ENCODE measurements at regions of chr1 and their contacts with region 1.

Region 1: DNA sequence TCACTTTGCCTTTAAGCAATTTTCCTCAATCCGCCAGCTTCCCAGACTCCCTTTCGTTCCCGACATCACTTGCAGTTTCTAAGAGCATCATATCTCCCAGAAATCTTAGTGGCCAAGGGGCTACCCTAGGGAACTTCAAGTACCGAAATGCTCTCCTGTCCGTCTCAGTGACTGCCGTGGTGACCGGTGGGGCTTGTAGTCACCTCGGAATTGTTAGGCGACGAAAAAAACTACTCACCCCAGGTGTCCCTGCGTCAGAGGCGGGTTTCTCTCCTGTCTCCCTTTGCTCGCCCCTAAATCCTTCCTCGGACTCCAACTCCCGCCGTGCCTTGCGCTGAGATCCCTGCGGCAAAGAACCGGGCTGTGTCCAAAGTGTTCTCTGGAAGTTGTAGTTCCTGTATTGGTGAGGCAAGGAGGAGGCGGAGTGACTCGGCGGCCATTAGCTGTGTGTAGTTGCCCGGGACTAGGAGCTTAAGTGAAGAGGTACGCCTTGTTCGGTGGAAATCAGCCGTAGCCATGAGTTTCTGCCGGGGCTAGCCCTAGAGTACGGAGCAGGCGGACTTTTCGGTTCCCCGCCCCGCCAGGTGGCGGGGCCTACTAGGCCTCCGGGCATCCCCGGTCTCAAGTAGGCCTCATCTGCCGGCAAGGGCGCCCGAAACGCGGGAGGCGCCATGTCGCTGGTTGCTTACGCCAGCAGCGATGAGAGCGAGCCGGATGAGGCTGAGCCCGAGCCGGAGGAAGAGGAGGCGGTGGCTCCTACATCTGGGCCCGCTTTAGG is at the start of gene PRCC:
- DNase-seq: peak; percentile 100
- H3K4me3 Mint-ChIP-seq: no peak within 1 kb of the TSS
- H3K27ac Mint-ChIP-seq: no peak within 1 kb of the TSS
- H3K4me1 Mint-ChIP-seq: peaks cover 36% of the 10 kb centered on the region
- H3K27me3 Mint-ChIP-seq: no peaks in the 10 kb centered on the region
- CTCF ChIP-seq: no peak
- total RNA-seq, gene PRCC: 112 and 131 TPM in 2 replicates

Region 2: DNA sequence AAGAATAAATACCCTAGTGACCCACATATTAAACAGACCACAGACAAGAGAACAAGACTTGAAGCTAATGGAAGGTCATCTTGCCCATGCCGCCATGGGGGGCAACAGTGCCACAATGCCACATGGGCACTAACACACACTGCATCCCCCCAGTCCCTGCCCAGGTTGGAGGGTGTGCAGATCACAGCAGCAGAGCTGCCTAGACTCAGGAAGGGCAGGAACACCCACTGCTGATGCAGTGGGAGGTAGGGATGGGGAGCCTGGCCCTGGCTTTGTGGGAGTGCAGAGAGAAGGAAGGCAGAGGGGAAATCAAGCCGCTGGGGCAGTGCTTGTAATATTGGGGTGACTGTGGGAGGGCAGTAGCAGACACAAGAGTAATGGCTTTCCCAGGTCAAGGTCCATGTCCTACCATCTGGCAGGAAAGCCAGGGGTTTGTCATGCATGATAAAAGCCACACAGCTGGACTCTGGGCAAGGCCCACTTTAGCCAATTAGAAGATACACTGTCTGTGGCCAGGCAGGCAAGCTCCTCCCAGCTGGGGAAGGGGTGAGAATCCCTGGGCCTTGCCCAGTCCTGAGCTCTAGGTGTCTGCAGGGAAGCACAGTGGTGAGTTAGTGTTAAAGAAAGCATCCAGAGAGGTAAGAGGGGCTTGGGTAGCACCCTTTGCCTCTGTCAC is 241.3 kb before region 1 on chr1:
- CTCF ChIA-PET with region 1: no interaction called
- POLR2A ChIA-PET with region 1: no interaction called
- intact Hi-C with region 1: no loop called
- DNase-seq: no peak
- H3K4me3 Mint-ChIP-seq: no peak overlapping the region
- H3K27ac Mint-ChIP-seq: no peak overlapping the region
- H3K4me1 Mint-ChIP-seq: no peaks in the 10 kb centered on the region
- H3K27me3 Mint-ChIP-seq: no peaks in the 10 kb centered on the region
- CTCF ChIP-seq: no peak

Region 3: GRCh38 chr1:156705918-156706656 is 61.2 kb before region 1 on chr1:
- CTCF ChIA-PET with region 1: interaction called, 11 read pairs
- POLR2A ChIA-PET with region 1: interaction called, 4 read pairs
- intact Hi-C with region 1: no loop called
- DNase-seq: peak; percentile 57
- H3K4me3 Mint-ChIP-seq: peak overlapping the region; percentile 30
- H3K27ac Mint-ChIP-seq: no peak overlapping the region
- H3K4me1 Mint-ChIP-seq: peaks cover 38% of the 10 kb centered on the region
- H3K27me3 Mint-ChIP-seq: no peaks in the 10 kb centered on the region
- CTCF ChIP-seq: peak; percentile 99

Region 4: GRCh38 chr1:156733989-156734584 is 33.2 kb before region 1 on chr1:
- CTCF ChIA-PET with region 1: interaction called, 12 read pairs
- POLR2A ChIA-PET with region 1: interaction called, 375 read pairs
- intact Hi-C with region 1: no loop called
- DNase-seq: no peak
- H3K4me3 Mint-ChIP-seq: no peak overlapping the region
- H3K27ac Mint-ChIP-seq: peak overlapping the region; percentile 66
- H3K4me1 Mint-ChIP-seq: peaks cover 16% of the 10 kb centered on the region
- H3K27me3 Mint-ChIP-seq: no peaks in the 10 kb centered on the region
- CTCF ChIP-seq: no peak

Region 5: DNA sequence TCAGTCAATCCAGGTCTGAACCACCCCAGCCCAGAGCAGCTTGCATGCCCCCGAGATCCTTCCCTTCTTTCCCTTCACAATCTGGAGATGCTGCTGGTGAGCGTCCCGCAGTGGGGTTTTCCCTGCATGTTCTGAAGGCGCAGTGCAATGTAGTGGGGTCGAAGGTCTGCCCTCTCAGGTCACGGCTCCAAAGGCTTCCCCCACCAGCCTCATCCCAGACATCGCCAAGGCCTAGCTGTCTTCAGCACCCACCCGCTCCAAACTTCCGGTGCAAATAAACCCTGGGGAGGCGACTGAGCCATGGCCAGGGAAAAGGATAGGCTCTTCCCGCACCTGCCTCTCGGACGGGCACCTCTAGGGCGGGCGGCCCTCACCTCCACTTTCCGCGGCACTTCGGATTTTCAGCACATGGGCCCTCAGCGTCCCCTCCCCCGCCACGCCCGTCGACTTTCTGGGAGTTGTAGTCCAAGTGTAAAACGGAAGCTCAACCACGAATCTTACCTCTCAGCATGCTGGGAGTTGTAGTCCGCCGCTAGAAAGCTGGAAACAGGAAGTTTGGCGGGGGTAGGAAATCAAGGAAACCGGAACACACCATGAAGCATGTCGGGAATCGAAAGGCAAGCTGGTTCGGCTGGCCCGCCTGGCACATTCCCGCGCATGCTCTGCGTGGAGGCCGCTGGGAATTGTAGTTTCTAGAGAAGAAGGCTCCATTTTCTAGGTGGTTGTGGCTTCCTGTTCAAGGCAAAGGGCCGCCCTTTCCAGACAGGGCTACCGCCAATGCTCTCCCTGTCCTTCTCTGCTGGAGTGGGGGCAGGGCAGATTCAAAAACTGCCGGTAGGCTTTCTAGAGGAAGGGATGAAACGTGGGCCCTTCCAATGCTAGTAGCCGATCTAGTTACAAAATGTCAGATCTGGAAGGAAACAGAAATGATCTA is 26.3 kb before region 1 on chr1 and contains the start of gene MRPL24:
- CTCF ChIA-PET with region 1: interaction called, 12 read pairs
- POLR2A ChIA-PET with region 1: interaction called, 375 read pairs
- intact Hi-C with region 1: loop called (anchors 1 kb)
- DNase-seq: peak; percentile 100
- H3K4me3 Mint-ChIP-seq: peak within 1 kb of the TSS; percentile 100
- H3K27ac Mint-ChIP-seq: peak within 1 kb of the TSS; percentile 98
- H3K4me1 Mint-ChIP-seq: peaks cover 30% of the 10 kb centered on the region
- H3K27me3 Mint-ChIP-seq: no peaks in the 10 kb centered on the region
- CTCF ChIP-seq: no peak
- total RNA-seq, gene MRPL24: 233 and 261 TPM in 2 replicates

Region 6: DNA sequence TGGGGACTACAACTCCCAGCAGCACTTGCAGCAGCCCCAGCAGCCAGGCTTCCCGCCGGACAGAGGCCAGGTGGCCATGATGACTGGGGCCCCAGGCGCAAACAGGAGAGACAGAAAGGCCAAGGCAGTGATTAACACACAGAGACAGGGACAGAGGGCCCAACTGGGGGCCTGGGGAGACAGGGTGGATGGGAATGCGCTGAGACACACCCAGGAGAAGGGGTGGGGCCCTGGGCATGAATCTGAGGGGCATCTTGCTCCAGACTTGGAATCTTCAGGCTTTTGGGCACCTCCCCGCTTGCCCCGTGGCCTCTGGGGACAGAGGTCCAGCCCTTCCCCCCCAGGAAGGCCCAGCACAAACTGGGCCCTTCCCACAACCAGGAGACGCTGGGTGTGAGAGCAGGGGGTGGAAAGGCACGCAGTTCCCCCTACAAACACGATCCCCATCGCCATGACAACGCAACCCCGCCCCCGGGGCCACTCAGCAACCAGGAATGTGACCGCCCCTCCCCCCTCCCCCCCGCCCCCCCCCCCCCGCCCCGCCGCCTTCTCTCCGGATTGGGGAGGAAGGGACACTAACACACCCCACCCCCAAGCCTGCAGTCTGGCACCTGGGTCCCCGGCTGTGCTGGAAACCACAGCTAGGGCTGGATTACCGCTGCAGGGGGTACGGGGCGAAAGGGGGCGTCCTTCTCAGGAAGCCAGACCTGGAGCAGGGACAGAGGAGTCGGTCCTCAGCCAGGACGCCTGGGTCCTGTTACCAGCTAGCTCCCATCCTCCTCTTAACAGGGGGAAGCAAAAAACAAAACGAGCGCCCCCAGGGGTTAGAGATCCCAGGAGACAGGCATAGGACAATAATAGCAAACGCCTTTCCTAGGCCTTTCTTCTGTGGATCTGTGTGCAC is 20.3 kb before region 1 on chr1:
- CTCF ChIA-PET with region 1: interaction called, 12 read pairs
- POLR2A ChIA-PET with region 1: interaction called, 375 read pairs
- intact Hi-C with region 1: loop called (anchors 1 kb)
- DNase-seq: peak; percentile 93
- H3K4me3 Mint-ChIP-seq: peak overlapping the region; percentile 79
- H3K27ac Mint-ChIP-seq: peak overlapping the region; percentile 99
- H3K4me1 Mint-ChIP-seq: peaks cover 60% of the 10 kb centered on the region
- H3K27me3 Mint-ChIP-seq: no peaks in the 10 kb centered on the region
- CTCF ChIP-seq: no peak

Region 7: DNA sequence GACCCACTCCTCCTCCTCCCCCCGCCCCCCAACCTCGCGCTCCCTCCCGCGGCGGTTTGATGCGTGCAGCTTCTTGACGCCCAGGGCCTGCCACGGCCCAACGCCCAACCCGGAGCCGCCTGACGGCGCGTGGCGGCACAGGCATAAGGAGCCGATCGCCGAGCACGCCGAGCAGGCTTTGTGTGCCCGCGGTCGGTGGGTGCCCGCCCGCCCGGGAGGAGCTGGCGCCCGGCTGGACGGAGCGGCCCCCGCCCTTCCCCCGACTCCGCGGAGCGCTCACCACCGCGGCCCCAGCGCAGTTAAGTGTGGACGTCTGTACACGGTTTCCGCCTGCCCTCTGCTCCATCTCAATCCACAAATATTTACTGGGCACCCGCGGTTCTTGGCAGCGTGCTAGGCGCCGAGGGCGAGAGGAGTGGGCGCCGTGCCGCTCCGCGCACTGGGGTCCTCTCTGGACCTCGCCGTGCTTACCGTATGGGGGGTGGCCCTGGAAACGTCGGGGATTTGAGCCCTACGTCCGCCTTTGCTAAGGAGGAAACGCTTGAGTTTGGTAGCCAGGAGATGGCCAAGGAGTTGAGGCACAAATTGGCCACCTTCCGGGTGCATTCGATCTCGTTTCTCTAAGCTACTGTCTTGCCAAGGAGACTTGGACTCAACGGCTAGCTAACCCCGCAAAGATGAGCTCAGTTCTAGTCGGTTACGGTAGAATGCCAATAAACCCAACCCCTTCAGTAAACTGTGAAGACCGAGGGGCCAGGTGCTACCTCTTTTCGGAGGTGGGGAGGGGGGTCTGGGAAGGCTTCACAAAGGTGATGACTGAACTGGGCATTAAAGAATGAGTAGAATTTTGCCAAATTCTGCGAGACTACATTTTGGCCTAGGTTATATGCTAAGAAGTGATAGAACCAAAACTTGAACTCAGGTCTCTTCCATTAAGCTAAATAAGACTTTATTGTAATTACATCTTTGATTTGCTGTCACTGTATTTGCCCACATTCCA is 15.2 kb before region 1 on chr1:
- CTCF ChIA-PET with region 1: interaction called, 12 read pairs
- POLR2A ChIA-PET with region 1: interaction called, 375 read pairs
- intact Hi-C with region 1: loop called (anchors 1 kb)
- DNase-seq: peak; percentile 99
- H3K4me3 Mint-ChIP-seq: peak overlapping the region; percentile 79
- H3K27ac Mint-ChIP-seq: peak overlapping the region; percentile 99
- H3K4me1 Mint-ChIP-seq: peaks cover 37% of the 10 kb centered on the region
- H3K27me3 Mint-ChIP-seq: no peaks in the 10 kb centered on the region
- CTCF ChIP-seq: no peak

Region 8: GRCh38 chr1:156781585-156782186 is 14.4 kb after region 1 on chr1:
- CTCF ChIA-PET with region 1: interaction called, 22 read pairs
- POLR2A ChIA-PET with region 1: interaction called, 22 read pairs
- intact Hi-C with region 1: no loop called
- DNase-seq: no peak
- H3K4me3 Mint-ChIP-seq: no peak overlapping the region
- H3K27ac Mint-ChIP-seq: peak overlapping the region; percentile 66
- H3K4me1 Mint-ChIP-seq: peaks cover 28% of the 10 kb centered on the region
- H3K27me3 Mint-ChIP-seq: no peaks in the 10 kb centered on the region
- CTCF ChIP-seq: no peak